Posterior vena cava (tissue), 2 donors: ENCODE measurements at regions of chr10 and their contacts with region 1.

Region 1: DNA sequence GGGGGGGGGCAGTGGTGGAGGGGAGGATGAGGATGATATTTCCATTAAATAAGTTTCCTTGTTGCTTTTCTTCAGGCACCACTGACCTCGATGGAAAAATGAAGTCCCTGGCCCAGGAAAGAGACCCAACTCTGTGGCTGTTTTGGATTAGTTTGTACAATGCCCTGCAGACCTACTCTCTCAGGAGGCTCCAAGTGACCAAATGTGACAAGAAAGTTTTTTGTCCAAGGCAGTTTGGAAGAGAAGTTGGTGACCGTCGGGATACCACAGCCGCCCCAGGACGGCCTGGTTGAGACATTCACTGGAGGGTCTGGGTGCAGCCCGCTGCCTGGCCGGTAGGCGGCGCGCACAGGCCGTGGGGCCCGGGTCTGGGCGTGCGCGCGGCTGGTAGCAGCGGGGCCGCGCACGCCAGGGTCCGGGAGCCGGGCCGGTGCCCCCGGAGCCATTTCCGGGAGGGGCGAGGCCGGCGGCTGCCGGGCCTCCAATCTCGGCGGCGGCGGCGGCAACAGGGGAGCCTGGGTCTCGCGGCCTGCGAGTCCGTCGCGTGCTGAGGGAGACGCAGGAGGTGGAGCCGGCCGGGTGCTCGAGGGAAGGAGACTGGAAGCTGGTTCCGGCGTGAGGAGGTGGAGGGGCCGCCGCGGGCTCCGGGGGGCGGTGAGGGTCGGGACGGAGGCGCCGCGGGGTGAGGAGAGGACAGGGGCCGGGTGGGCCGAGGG is at the start of gene SGPL1:
- DNase-seq: peak; percentile 95
- total RNA-seq, gene SGPL1: 27.9 to 37.2 TPM

Region 2: DNA sequence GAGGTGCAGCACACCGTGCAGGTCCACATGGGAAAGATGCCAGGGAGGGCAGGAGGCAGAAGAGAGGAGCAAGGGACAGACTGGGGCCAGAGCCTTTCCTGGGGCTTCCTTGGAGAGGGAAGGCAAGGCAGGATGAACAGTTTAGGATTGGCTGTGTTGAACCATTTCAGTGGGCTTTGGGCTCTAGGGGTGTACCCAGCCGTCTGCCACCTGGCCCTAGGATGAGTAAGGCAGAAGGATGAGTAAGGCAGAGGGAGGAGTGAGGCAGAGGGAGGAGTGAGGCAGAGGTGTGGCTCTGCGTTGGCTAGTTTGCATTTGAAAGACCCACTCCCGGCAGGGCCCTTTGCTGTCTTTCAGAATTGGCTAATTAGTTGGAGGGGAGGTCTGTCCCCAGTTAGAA is 181.7 kb before region 1 on chr10:
- intact Hi-C with region 1: no loop called
- DNase-seq: no peak

Region 3: DNA sequence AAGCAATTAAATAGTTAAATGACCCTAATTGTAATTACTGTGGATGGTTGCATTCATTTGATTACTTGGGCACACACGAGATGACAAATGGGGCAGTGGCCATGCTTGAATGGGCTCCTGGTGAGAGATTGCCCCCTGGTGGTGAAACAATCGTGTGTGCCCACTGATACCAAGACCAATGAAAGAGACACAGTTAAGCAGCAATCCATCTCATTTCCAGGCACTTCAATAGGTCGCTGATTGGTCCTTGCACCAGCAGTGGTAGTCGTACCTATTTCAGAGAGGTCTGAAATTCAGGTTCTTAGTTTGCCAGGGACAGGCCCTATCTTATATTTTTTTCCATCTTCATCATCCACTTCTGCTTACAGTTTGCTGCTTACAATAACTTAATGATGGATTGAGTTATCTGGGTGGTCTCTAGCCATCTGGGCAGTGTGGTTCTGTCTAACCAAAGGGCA is 64.4 kb after region 1 on chr10:
- intact Hi-C with region 1: loop called (anchors 5 kb)
- DNase-seq: peak; percentile 88

Region 4: GRCh38 chr10:70887804-70888800 is 72.4 kb after region 1 on chr10 and contains the start of gene PCBD1:
- intact Hi-C with region 1: loop called (anchors 5 kb)
- DNase-seq: peak; percentile 91
- total RNA-seq, gene PCBD1: 48.7 to 54.1 TPM